ENCODE measurements at regions of chr6 and their contacts with region 1.

Region 1: GRCh38 chr6:16319813-16320532 is 81.6 kb downstream of the GMPR start:
- DNase-seq: peak; percentile 27 to 90 (median 68)
- ATAC-seq: peak; percentile 58
- H3K4me3 ChIP-seq: peak overlapping the region; percentile 17 to 33
- H3K4me3 Mint-ChIP-seq: peak overlapping the region; percentile 67
- H3K27ac ChIP-seq: peak overlapping the region; percentile 69 to 85
- H3K27ac Mint-ChIP-seq: peak overlapping the region; percentile 94
- H3K4me1 ChIP-seq: peaks cover 73% of the 10 kb centered on the region
- H3K4me1 Mint-ChIP-seq: peaks cover 75% of the 10 kb centered on the region
- H3K27me3 ChIP-seq: no peaks in the 10 kb centered on the region
- H3K27me3 Mint-ChIP-seq: no peaks in the 10 kb centered on the region
- CTCF ChIP-seq: no peak

Region 2: GRCh38 chr6:16183187-16183664 is 136.7 kb before region 1 on chr6:
- CTCF ChIA-PET with region 1: no interaction called
- POLR2A ChIA-PET with region 1: no interaction called
- intact Hi-C with region 1: loop called in 1 of 2 experiments (anchors 5 kb)
- DNase-seq: peak in 2 of 9 experiments; percentile 44 to 62
- ATAC-seq: peak; percentile 36
- H3K4me3 ChIP-seq: no peak overlapping the region
- H3K4me3 Mint-ChIP-seq: no peak overlapping the region
- H3K27ac ChIP-seq: no peak overlapping the region
- H3K27ac Mint-ChIP-seq: no peak overlapping the region
- H3K4me1 ChIP-seq: peaks cover 17% of the 10 kb centered on the region
- H3K4me1 Mint-ChIP-seq: peaks cover 35% of the 10 kb centered on the region
- H3K27me3 ChIP-seq: no peaks in the 10 kb centered on the region
- H3K27me3 Mint-ChIP-seq: no peaks in the 10 kb centered on the region
- CTCF ChIP-seq: peak; percentile 89

Region 3: DNA sequence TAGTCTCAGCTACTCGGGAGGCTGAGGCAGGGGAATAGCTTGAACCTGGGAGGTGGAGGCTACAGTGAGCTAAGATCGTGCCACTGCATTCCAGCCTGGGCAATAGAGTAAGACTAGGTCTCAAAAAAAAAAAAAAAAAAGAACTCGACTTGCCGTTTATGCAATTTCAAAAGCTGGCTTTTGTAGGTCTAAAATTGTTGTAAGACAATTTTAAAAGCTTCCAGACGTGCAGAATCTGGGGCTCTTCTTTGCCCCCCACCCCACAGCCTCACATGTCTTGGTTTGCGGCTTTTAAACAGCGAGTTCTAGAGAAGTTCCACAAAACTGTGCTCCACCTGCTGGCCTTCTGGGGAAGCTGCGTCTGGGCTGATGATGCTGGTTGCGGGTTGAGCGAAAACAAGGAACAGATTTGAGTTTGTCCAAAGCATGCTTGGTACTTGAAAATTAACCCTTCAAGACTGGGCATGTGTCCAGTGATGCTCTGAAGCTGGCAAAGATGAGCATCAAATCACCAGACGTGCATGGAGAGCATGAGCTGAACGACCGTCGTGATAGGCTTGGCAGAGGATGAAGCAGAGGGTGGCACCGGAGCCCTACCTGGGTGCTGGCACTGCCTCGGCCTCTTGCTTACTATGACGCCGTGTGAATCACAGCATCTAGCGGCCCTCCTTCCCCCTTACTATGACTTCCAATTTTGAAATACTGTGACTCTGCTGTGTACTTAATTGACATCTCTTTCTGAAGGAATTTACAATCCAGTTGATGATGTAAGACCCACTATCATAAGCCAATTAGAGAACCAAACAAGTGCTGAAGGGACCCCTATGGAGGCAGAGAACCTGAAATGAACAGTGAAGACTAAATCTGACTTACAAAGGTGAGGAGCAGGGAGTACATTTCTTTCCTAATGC is 89.8 kb after region 1 on chr6:
- CTCF ChIA-PET with region 1: interaction called, 10 read pairs
- POLR2A ChIA-PET with region 1: interaction called, 3 read pairs
- intact Hi-C with region 1: no loop called
- DNase-seq: peak; percentile 8 to 76 (median 60)
- ATAC-seq: peak; percentile 67
- H3K4me3 ChIP-seq: no peak overlapping the region
- H3K4me3 Mint-ChIP-seq: no peak overlapping the region
- H3K27ac ChIP-seq: no peak overlapping the region
- H3K27ac Mint-ChIP-seq: peak overlapping the region; percentile 7
- H3K4me1 ChIP-seq: no peaks in the 10 kb centered on the region
- H3K4me1 Mint-ChIP-seq: peaks cover 26% of the 10 kb centered on the region
- H3K27me3 ChIP-seq: no peaks in the 10 kb centered on the region
- H3K27me3 Mint-ChIP-seq: no peaks in the 10 kb centered on the region
- CTCF ChIP-seq: peak; percentile 66

Region 4: GRCh38 chr6:16564436-16564835 is 244.5 kb after region 1 on chr6:
- CTCF ChIA-PET with region 1: no interaction called
- POLR2A ChIA-PET with region 1: no interaction called
- intact Hi-C with region 1: no loop called
- DNase-seq: no peak
- ATAC-seq: no peak
- H3K4me3 ChIP-seq: no peak overlapping the region
- H3K4me3 Mint-ChIP-seq: no peak overlapping the region
- H3K27ac ChIP-seq: no peak overlapping the region
- H3K27ac Mint-ChIP-seq: no peak overlapping the region
- H3K4me1 ChIP-seq: no peaks in the 10 kb centered on the region
- H3K4me1 Mint-ChIP-seq: peaks cover 6% of the 10 kb centered on the region
- H3K27me3 ChIP-seq: no peaks in the 10 kb centered on the region
- H3K27me3 Mint-ChIP-seq: no peaks in the 10 kb centered on the region
- CTCF ChIP-seq: no peak

Region 5: GRCh38 chr6:16964553-16965501 is 644.9 kb after region 1 on chr6:
- CTCF ChIA-PET with region 1: no interaction called
- POLR2A ChIA-PET with region 1: no interaction called
- intact Hi-C with region 1: loop called in 1 of 2 experiments (anchors 5 kb)
- DNase-seq: peak; percentile 34 to 72 (median 59)
- ATAC-seq: peak; percentile 92
- H3K4me3 ChIP-seq: no peak overlapping the region
- H3K4me3 Mint-ChIP-seq: no peak overlapping the region
- H3K27ac ChIP-seq: no peak overlapping the region
- H3K27ac Mint-ChIP-seq: no peak overlapping the region
- H3K4me1 ChIP-seq: peaks cover 4% of the 10 kb centered on the region
- H3K4me1 Mint-ChIP-seq: peaks cover 6% of the 10 kb centered on the region
- H3K27me3 ChIP-seq: no peaks in the 10 kb centered on the region
- H3K27me3 Mint-ChIP-seq: peaks cover 14% of the 10 kb centered on the region
- CTCF ChIP-seq: peak; percentile 67

Region 6: DNA sequence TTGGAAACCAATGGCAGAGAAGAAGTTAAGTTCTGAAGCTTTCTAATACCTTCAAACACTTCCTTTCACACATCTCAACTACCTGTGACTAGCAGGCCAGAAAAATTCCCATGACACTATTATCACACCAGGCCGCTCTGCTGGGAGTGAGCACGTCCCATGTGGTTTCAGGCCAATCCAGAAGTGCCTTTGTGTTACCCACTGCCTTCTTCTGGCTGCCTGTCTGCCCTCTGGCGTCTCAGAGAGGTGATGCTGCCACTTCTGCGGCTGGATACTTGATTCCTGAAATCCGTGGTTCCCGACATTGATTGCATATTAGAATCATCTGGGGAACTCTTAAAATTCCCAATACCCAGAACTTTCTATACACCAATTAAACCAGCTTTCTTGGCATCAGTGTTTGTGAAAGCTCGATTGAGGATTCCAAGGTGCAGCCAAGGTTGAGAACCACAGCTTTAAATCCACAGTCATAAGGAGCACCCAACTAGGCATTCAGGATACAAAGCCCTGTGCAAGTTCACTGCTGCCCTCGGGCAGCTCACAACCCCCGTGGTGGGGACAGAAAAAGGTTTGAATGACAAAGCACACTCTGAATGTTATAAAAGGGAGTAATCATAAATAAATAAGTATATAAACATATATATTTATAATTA is 847.5 kb after region 1 on chr6:
- CTCF ChIA-PET with region 1: no interaction called
- POLR2A ChIA-PET with region 1: no interaction called
- intact Hi-C with region 1: no loop called
- DNase-seq: peak in 1 of 9 experiments; percentile 2
- ATAC-seq: no peak
- H3K4me3 ChIP-seq: no peak overlapping the region
- H3K4me3 Mint-ChIP-seq: no peak overlapping the region
- H3K27ac ChIP-seq: no peak overlapping the region
- H3K27ac Mint-ChIP-seq: no peak overlapping the region
- H3K4me1 ChIP-seq: no peaks in the 10 kb centered on the region
- H3K4me1 Mint-ChIP-seq: no peaks in the 10 kb centered on the region
- H3K27me3 ChIP-seq: no peaks in the 10 kb centered on the region
- H3K27me3 Mint-ChIP-seq: peaks cover 2% of the 10 kb centered on the region
- CTCF ChIP-seq: no peak

Region 7: GRCh38 chr6:17700421-17701416 is 1380.7 kb after region 1 on chr6:
- CTCF ChIA-PET with region 1: no interaction called
- POLR2A ChIA-PET with region 1: no interaction called
- intact Hi-C with region 1: loop called in 1 of 2 experiments (anchors 5 kb)
- DNase-seq: no peak
- ATAC-seq: no peak
- H3K4me3 ChIP-seq: no peak overlapping the region
- H3K4me3 Mint-ChIP-seq: no peak overlapping the region
- H3K27ac ChIP-seq: peak overlapping the region in 1 of 2 experiments; percentile 3
- H3K27ac Mint-ChIP-seq: peak overlapping the region; percentile 74
- H3K4me1 ChIP-seq: peaks cover 34% of the 10 kb centered on the region
- H3K4me1 Mint-ChIP-seq: peaks cover 62% of the 10 kb centered on the region
- H3K27me3 ChIP-seq: no peaks in the 10 kb centered on the region
- H3K27me3 Mint-ChIP-seq: no peaks in the 10 kb centered on the region
- CTCF ChIP-seq: no peak

Region 8: GRCh38 chr6:17725083-17725482 is 1405.1 kb after region 1 on chr6:
- CTCF ChIA-PET with region 1: no interaction called
- POLR2A ChIA-PET with region 1: no interaction called
- intact Hi-C with region 1: no loop called
- DNase-seq: no peak
- ATAC-seq: no peak
- H3K4me3 ChIP-seq: no peak overlapping the region
- H3K4me3 Mint-ChIP-seq: no peak overlapping the region
- H3K27ac ChIP-seq: no peak overlapping the region
- H3K27ac Mint-ChIP-seq: no peak overlapping the region
- H3K4me1 ChIP-seq: no peaks in the 10 kb centered on the region
- H3K4me1 Mint-ChIP-seq: no peaks in the 10 kb centered on the region
- H3K27me3 ChIP-seq: no peaks in the 10 kb centered on the region
- H3K27me3 Mint-ChIP-seq: no peaks in the 10 kb centered on the region
- CTCF ChIP-seq: no peak

Measured in CD8-positive, alpha-beta T cell (primary cell).